CD8-positive, alpha-beta T cell (primary cell): ENCODE measurements at regions of chr5 and their contacts with region 1.

Region 1: GRCh38 chr5:122999945-123000563 is 36.5 kb downstream of the PPIC start:
- DNase-seq: peak in 3 of 9 experiments; percentile 8 to 53 (median 43)
- ATAC-seq: no peak
- H3K4me3 ChIP-seq: no peak overlapping the region
- H3K4me3 Mint-ChIP-seq: no peak overlapping the region
- H3K27ac ChIP-seq: no peak overlapping the region
- H3K27ac Mint-ChIP-seq: no peak overlapping the region
- H3K4me1 ChIP-seq: no peaks in the 10 kb centered on the region
- H3K4me1 Mint-ChIP-seq: peaks cover 2% of the 10 kb centered on the region
- H3K27me3 ChIP-seq: no peaks in the 10 kb centered on the region
- H3K27me3 Mint-ChIP-seq: no peaks in the 10 kb centered on the region
- CTCF ChIP-seq: no peak

Region 2: GRCh38 chr5:122192497-122193496 is 807.3 kb before region 1 on chr5:
- CTCF ChIA-PET with region 1: no interaction called
- POLR2A ChIA-PET with region 1: no interaction called
- intact Hi-C with region 1: loop called in 1 of 2 experiments (anchors 10 kb)
- DNase-seq: peak in 2 of 9 experiments; percentile 7 to 20
- ATAC-seq: no peak
- H3K4me3 ChIP-seq: no peak overlapping the region
- H3K4me3 Mint-ChIP-seq: no peak overlapping the region
- H3K27ac ChIP-seq: no peak overlapping the region
- H3K27ac Mint-ChIP-seq: no peak overlapping the region
- H3K4me1 ChIP-seq: no peaks in the 10 kb centered on the region
- H3K4me1 Mint-ChIP-seq: no peaks in the 10 kb centered on the region
- H3K27me3 ChIP-seq: no peaks in the 10 kb centered on the region
- H3K27me3 Mint-ChIP-seq: peaks cover 13% of the 10 kb centered on the region
- CTCF ChIP-seq: no peak

Region 3: DNA sequence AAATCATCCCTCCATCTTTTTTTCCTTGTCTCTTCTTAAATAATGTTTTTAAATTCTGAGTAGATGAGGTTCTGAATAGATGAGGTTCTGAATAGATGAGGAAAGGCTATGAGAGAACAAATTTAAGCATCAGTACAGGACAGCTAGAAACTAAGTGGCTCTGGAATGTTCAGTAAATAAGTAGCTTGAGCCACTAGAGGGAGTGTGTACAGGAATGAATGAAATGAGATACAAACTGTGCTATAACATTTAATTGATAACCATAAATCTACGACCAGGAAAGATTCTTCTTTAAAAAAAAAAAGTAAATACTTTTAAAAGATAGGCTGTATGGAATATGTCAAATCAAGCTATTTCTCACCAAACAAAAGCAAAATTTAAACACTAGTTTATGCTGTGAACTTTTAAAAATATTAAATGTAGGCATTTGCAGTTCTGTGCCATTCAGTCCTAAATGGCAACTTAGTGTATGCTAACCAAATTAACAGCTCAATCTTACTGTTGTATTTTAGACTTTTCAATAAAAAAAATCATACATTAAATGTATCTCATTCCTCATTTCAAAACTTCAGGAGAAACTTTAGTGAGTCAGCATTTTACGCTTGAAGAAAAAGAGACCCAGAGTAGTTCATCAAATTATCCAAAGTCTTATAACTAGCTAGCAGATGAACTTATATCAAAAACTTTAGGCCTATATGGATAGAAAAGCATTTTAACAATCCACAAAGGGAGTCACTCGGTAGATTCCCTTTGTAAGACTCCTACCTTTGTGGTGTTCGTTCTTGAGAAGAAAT is 295.6 kb before region 1 on chr5:
- CTCF ChIA-PET with region 1: no interaction called
- POLR2A ChIA-PET with region 1: no interaction called
- intact Hi-C with region 1: loop called in 1 of 2 experiments (anchors 10 kb)
- DNase-seq: peak in 2 of 9 experiments; percentile 20 to 22
- ATAC-seq: no peak
- H3K4me3 ChIP-seq: no peak overlapping the region
- H3K4me3 Mint-ChIP-seq: no peak overlapping the region
- H3K27ac ChIP-seq: no peak overlapping the region
- H3K27ac Mint-ChIP-seq: no peak overlapping the region
- H3K4me1 ChIP-seq: no peaks in the 10 kb centered on the region
- H3K4me1 Mint-ChIP-seq: no peaks in the 10 kb centered on the region
- H3K27me3 ChIP-seq: no peaks in the 10 kb centered on the region
- H3K27me3 Mint-ChIP-seq: peaks cover 9% of the 10 kb centered on the region
- CTCF ChIP-seq: peak; percentile 53

Region 4: DNA sequence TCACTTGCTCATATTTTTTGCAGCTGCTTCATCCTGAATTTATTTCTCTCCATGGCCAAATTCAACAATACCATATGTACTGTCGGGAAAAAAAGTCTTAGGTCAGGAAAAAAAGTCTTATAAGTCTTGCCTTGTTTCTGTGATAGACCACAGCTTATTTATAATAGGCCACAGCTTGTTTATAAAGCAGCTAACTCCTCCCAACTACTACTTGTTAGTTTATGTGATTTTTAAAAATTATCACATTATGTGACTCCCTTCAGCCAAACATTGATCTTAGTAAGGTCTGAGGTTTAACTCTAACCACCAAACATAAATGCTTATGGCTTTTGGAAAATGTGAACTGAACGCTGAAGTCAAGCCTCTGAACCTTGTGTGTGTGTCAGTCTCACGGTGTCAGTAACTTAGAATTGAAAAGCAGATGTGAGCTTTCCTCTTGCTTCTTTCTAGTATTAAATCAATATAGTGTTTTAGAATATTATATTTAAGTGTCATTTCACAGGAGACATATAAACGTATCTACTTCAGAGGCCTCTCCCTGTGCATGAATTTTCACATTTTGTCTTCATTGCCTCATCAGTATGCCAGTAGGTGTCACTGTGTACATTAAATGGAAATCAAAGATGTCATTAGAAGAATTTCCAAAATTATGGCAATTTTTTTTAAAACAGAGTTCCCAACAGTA is 103.3 kb before region 1 on chr5:
- CTCF ChIA-PET with region 1: no interaction called
- POLR2A ChIA-PET with region 1: no interaction called
- intact Hi-C with region 1: loop called in 1 of 2 experiments (anchors 10 kb)
- DNase-seq: peak in 2 of 9 experiments; percentile 15 to 19
- ATAC-seq: no peak
- H3K4me3 ChIP-seq: no peak overlapping the region
- H3K4me3 Mint-ChIP-seq: no peak overlapping the region
- H3K27ac ChIP-seq: no peak overlapping the region
- H3K27ac Mint-ChIP-seq: no peak overlapping the region
- H3K4me1 ChIP-seq: no peaks in the 10 kb centered on the region
- H3K4me1 Mint-ChIP-seq: peaks cover under 1% of the 10 kb centered on the region
- H3K27me3 ChIP-seq: no peaks in the 10 kb centered on the region
- H3K27me3 Mint-ChIP-seq: no peaks in the 10 kb centered on the region
- CTCF ChIP-seq: no peak